ENCODE measurements at regions of chrX and their contacts with region 1.

Region 1: DNA sequence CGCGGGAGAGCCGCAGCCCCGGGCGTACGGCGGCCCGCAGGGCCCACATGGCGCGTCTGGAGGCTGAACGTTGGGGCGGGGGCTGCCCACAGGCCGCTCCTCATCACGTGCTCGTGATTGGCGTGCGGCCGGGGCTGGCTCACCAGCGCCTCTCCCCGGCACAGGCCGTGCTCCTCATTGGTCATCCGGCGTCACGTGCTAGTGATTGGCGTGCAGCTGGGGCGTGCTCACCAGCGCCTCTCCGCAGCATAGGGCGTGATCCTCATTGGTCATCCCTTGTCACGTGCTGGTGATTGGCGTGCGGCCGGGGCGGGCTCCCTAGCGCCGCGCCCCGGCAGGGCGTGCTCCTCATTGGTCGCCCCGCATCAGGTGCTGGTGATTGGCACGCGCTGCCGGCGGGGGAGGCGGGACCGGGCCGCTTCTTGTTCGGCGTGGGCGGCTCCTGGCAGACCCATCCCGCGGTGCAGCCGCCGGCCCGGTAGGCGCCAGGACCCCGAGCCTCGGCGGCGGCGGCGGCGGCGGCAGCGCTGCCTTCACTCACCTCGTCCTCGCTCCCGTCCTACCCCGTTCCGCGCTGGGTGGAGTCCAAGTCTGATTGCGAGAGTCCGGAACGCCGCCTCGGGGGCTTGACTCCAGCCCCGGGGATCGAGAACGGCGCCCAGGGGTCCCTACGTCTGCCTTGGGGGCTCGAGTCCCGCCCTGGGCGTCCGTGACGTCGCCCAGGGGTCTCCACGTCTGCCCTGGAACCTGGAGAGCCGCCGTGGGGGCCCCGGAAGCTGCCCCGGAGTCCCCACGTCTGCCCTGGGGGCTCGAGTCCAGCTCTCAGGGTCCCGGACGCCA is at the start of gene GTPBP6:
- DNase-seq: peak; percentile 99
- H3K4me3 Mint-ChIP-seq: peak within 1 kb of the TSS; percentile 87
- H3K27ac Mint-ChIP-seq: peak within 1 kb of the TSS; percentile 95
- H3K4me1 Mint-ChIP-seq: peaks cover 22% of the 10 kb centered on the region
- H3K27me3 Mint-ChIP-seq: no peaks in the 10 kb centered on the region
- total RNA-seq, gene GTPBP6: 65.5 and 67.0 TPM in 2 replicates

Region 2: GRCh38 chrX:283115-283845 is 35.7 kb before region 1 on chrX:
- intact Hi-C with region 1: loop called (anchors 1 kb)
- DNase-seq: peak; percentile 87
- H3K4me3 Mint-ChIP-seq: peak overlapping the region; percentile 91
- H3K27ac Mint-ChIP-seq: peak overlapping the region; percentile 97
- H3K4me1 Mint-ChIP-seq: peaks cover 15% of the 10 kb centered on the region
- H3K27me3 Mint-ChIP-seq: no peaks in the 10 kb centered on the region

Region 3: DNA sequence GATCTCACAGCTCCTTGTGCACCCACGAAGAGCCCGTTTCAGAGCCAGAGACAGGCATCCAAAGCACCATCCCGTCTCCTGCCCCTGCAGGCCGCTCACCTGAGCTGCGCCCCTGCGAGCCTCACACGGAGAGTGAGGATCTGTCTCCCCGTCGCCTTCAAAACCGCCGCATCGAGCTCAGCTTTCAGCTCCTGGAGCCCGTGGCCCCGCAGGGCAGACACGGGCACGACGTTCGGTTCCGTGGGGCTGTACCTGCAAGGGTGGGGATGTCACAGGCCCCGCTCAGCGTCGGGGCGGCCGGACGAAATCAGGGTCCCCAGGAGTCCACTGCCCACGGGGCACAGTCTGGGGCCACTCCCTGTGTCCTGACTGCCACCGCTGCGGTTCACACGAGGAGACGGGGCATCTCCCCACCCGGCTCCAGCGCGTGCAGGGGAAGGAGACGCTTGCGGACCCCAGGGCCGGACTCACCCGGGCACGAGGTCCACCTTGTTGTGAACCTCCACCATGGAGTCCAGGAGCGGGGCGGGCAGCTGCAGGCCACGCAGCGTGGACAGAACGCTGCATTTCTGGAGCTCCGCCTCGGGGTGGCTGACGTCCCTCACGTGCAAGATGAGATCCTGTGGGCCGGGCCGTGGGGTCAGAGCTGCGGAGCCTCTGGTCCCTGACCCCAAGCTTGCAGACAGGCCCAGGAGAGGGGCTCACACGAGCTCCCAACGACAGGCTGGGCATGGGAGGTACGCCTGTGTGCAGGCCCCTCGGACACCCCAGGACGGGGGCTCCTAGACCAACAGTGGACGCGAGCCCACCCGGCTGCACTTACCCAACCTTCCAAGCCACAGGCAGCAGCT is 11.5 kb before region 1 on chrX:
- intact Hi-C with region 1: no loop called
- DNase-seq: no peak
- H3K4me3 Mint-ChIP-seq: no peak overlapping the region
- H3K27ac Mint-ChIP-seq: no peak overlapping the region
- H3K4me1 Mint-ChIP-seq: no peaks in the 10 kb centered on the region
- H3K27me3 Mint-ChIP-seq: no peaks in the 10 kb centered on the region

Region 4: GRCh38 chrX:386768-387575 is 68.0 kb after region 1 on chrX and contains the start of gene PPP2R3B:
- intact Hi-C with region 1: loop called (anchors 1 kb)
- DNase-seq: peak; percentile 99
- H3K4me3 Mint-ChIP-seq: peak within 1 kb of the TSS; percentile 84
- H3K27ac Mint-ChIP-seq: peak within 1 kb of the TSS; percentile 94
- H3K4me1 Mint-ChIP-seq: no peaks in the 10 kb centered on the region
- H3K27me3 Mint-ChIP-seq: no peaks in the 10 kb centered on the region
- total RNA-seq, gene PPP2R3B: 39.8 and 47.6 TPM in 2 replicates

Region 5: DNA sequence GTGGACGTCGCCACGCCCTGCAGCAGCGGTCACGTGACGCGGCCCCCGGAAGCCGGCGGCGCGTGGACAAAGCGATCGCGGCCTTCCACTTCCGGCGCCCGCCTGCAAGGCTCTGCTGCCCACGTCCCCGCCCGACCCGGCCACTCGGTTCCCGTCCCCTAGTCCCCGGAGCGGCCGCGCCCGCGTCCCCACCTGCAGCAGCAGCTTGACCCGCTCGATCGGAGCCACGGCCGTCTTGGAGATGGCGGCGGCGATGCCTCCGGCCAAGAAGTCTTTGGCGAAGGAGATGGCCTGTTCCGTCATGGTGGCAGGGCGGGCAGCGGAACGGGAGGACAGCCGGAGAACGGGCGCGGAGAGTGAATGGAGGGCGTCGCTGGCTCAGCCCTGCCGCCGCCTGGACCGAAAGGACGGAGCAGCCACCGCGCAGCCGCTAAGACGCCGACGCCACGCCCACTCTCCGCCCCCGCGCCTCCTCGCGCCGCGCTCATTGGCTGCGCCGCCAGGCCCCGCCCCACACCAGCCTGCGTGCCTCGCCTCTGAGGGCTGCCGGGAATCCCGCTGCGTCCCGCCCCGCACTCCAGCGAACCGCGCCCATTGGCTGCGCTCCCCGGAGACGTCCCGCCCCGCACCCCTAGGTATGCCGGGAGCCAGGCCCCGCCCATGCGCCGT is 1072.9 kb after region 1 on chrX and contains the start of gene SLC25A6:
- intact Hi-C with region 1: loop called (anchors 2 kb)
- DNase-seq: peak; percentile 99
- H3K4me3 Mint-ChIP-seq: peak within 1 kb of the TSS; percentile 95
- H3K27ac Mint-ChIP-seq: peak within 1 kb of the TSS; percentile 95
- H3K4me1 Mint-ChIP-seq: peaks cover 26% of the 10 kb centered on the region
- H3K27me3 Mint-ChIP-seq: no peaks in the 10 kb centered on the region
- total RNA-seq, gene SLC25A6: 318 and 325 TPM in 2 replicates

Region 6: DNA sequence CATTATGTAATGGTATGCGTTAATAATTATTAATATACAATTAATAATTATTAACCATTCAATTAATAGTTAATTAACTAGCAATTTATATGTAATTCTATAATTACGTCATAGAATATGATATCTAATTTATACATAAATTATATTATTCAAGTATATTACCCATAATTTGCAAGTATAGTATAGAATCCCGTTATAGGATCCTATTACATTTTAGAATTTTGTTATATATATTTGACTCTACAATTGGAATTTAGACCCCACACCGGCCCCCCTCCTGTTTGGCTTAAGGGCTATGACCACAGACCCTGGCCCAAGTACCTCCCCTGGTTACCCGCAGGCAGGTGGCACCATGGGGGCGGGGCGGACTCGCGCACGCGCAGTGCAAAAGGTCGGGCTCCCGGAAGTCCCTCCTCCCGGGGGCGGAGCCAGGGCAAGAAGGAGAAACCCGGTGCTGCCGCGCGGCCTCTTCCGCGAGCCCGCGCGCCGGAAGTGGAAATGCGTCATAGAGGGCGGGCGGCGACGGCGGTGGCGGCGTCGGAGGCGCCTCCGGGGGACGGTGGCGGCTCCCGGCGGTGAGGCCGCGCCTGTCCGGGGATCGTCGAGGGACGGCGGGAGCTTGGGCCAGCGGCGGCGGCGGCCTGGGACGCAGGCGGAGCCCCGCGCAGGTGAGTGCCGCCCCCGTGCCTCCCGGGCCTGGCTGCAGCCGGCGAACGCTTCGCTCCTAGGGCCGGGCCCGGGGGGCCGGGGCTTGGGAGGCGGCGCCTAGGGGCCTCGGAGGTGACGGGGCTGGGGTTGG is 1272.3 kb after region 1 on chrX and contains the start of gene AKAP17A:
- intact Hi-C with region 1: loop called (anchors 5 kb)
- DNase-seq: peak; percentile 98
- H3K4me3 Mint-ChIP-seq: peak within 1 kb of the TSS; percentile 93
- H3K27ac Mint-ChIP-seq: peak within 1 kb of the TSS; percentile 92
- H3K4me1 Mint-ChIP-seq: peaks cover 24% of the 10 kb centered on the region
- H3K27me3 Mint-ChIP-seq: no peaks in the 10 kb centered on the region
- total RNA-seq, gene AKAP17A: 67.4 and 67.6 TPM in 2 replicates